MCF 10A (cell line): ENCODE measurements at regions of chr4 and their contacts with region 1.

Region 1: DNA sequence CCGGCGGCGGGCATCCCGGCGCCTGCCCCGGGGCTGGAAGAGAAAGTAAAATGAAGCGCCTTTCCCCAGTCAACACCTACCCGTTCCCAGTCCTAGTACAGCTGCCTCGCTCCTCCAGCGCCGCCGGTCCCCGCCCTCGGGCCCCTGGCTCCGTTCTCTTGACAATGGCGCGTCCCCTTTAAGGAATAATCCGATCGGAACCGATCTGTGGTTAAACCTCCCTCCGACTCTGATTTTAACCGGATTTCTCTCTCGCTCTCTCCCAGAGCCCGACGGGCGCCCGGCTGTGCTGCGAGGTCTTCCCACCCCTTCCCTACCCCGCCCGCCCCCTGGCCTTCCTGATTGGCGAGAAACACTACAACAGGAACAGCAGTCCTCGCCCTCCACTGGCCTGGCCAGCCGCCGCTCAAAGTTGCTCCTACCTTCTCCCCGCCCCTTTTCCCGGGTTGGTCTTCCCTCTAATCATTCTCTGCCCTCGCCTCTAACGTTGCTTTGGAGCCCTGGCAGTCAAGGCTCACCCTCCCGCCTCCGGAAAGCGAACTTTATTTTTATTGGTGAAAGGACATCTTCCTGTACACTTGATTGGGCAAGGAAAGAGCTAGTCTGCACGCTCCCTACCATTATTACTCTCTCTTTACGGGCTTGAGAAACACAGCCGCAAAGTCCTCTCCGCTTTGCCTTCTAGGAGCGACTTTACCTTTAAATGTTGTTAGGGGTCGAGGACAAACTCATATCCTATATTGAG is at the start of gene FRYL:
- DNase-seq: peak; percentile 100
- H3K4me3 Mint-ChIP-seq: peak within 1 kb of the TSS; percentile 94
- H3K27ac Mint-ChIP-seq: peak within 1 kb of the TSS; percentile 96
- H3K4me1 Mint-ChIP-seq: peaks cover 25% of the 10 kb centered on the region
- H3K27me3 Mint-ChIP-seq: no peaks in the 10 kb centered on the region
- CTCF ChIP-seq: no peak
- total RNA-seq, gene FRYL: 52.3 and 53.9 TPM in 2 replicates

Region 2: GRCh38 chr4:48254381-48255071 is 525.6 kb before region 1 on chr4:
- CTCF ChIA-PET with region 1: no interaction called
- POLR2A ChIA-PET with region 1: no interaction called
- intact Hi-C with region 1: no loop called
- DNase-seq: peak; percentile 63
- H3K4me3 Mint-ChIP-seq: no peak overlapping the region
- H3K27ac Mint-ChIP-seq: no peak overlapping the region
- H3K4me1 Mint-ChIP-seq: peaks cover 10% of the 10 kb centered on the region
- H3K27me3 Mint-ChIP-seq: no peaks in the 10 kb centered on the region
- CTCF ChIP-seq: no peak

Region 3: GRCh38 chr4:48269861-48270522 is 510.2 kb before region 1 on chr4:
- CTCF ChIA-PET with region 1: no interaction called
- POLR2A ChIA-PET with region 1: no interaction called
- intact Hi-C with region 1: no loop called
- DNase-seq: peak; percentile 92
- H3K4me3 Mint-ChIP-seq: peak overlapping the region; percentile 85
- H3K27ac Mint-ChIP-seq: peak overlapping the region; percentile 7
- H3K4me1 Mint-ChIP-seq: no peaks in the 10 kb centered on the region
- H3K27me3 Mint-ChIP-seq: no peaks in the 10 kb centered on the region
- CTCF ChIP-seq: peak; percentile 19

Region 4: GRCh38 chr4:48578132-48578968 is 201.8 kb before region 1 on chr4:
- CTCF ChIA-PET with region 1: interaction called, 13 read pairs
- POLR2A ChIA-PET with region 1: interaction called, 48 read pairs
- intact Hi-C with region 1: loop called (anchors 1 kb)
- DNase-seq: peak; percentile 80
- H3K4me3 Mint-ChIP-seq: no peak overlapping the region
- H3K27ac Mint-ChIP-seq: peak overlapping the region; percentile 70
- H3K4me1 Mint-ChIP-seq: no peaks in the 10 kb centered on the region
- H3K27me3 Mint-ChIP-seq: no peaks in the 10 kb centered on the region
- CTCF ChIP-seq: peak; percentile 78

Region 5: GRCh38 chr4:48687313-48688051 is 92.7 kb before region 1 on chr4:
- CTCF ChIA-PET with region 1: no interaction called
- POLR2A ChIA-PET with region 1: interaction called, 26 read pairs
- intact Hi-C with region 1: loop called (anchors 5 kb)
- DNase-seq: no peak
- H3K4me3 Mint-ChIP-seq: no peak overlapping the region
- H3K27ac Mint-ChIP-seq: no peak overlapping the region
- H3K4me1 Mint-ChIP-seq: peaks cover 11% of the 10 kb centered on the region
- H3K27me3 Mint-ChIP-seq: no peaks in the 10 kb centered on the region
- CTCF ChIP-seq: no peak

Region 6: GRCh38 chr4:48792348-48793006 is 12.3 kb after region 1 on chr4:
- CTCF ChIA-PET with region 1: interaction called, 9 read pairs
- POLR2A ChIA-PET with region 1: interaction called, 16 read pairs
- intact Hi-C with region 1: no loop called
- DNase-seq: no peak
- H3K4me3 Mint-ChIP-seq: no peak overlapping the region
- H3K27ac Mint-ChIP-seq: no peak overlapping the region
- H3K4me1 Mint-ChIP-seq: no peaks in the 10 kb centered on the region
- H3K27me3 Mint-ChIP-seq: no peaks in the 10 kb centered on the region
- CTCF ChIP-seq: no peak

Region 7: DNA sequence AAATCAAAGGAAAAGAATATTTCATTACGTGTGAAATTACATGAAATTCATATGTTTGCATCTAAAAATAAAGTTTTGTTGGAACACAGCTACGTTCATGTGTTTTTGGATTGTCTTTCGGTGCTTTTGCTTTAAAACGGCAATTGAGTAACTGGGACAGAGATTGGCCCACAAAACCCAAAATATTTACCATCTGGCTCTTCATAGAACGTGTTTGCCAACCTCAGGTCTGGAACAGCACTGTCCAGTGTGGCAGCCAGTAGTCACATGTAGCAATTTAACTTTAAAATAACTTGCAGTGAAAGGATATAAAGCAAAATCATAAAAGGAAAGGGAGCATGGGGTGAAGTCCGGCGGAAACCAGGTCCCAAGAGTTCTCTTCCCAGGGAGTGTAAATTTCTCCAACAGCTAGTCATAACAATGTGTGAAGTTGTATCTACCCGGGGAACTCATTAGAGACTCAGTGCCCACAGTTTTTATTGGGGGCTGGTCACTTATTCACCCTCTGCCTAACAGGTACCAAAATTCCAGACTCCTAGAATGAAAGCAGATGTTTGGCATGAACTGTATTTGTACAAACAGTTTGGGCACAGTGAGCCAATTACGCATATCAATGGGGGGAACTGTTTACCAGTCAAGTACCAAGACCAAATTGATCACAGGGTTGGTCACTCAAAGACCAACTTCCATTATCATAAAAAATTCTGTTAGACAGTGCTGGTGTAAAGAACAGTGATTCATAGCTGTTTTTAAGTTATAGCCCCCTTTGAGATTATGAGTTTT is 61.1 kb after region 1 on chr4:
- CTCF ChIA-PET with region 1: interaction called, 4 read pairs
- POLR2A ChIA-PET with region 1: interaction called, 12 read pairs
- intact Hi-C with region 1: no loop called
- DNase-seq: no peak
- H3K4me3 Mint-ChIP-seq: no peak overlapping the region
- H3K27ac Mint-ChIP-seq: no peak overlapping the region
- H3K4me1 Mint-ChIP-seq: peaks cover 17% of the 10 kb centered on the region
- H3K27me3 Mint-ChIP-seq: no peaks in the 10 kb centered on the region
- CTCF ChIP-seq: no peak

Region 8: DNA sequence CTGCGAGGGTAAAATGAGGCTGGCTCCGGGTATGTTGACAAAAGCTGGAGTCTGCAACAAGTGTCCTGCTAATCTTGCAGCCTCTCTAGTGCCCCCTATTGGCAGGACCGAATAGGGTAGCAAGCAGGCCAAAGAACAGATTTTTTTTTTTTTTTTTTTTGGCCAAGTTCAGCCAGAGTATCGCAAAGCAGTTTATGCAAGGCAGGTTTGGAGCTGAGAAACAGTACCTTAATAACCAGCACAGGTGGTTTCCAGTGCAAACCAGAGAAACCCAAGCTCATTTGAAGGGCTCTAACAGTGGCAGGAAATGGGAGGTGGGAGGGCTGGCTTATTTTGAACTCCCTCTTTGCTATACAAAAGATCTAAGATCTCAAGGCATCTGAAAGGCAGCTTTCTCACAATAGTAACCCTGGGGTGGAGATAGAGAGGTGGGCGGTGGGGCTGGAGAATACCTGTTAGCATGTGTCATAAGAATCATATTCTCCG is 164.6 kb after region 1 on chr4:
- CTCF ChIA-PET with region 1: no interaction called
- POLR2A ChIA-PET with region 1: interaction called, 10 read pairs
- intact Hi-C with region 1: loop called (anchors 1 kb)
- DNase-seq: peak; percentile 73
- H3K4me3 Mint-ChIP-seq: peak overlapping the region; percentile 48
- H3K27ac Mint-ChIP-seq: peak overlapping the region; percentile 93
- H3K4me1 Mint-ChIP-seq: peaks cover 34% of the 10 kb centered on the region
- H3K27me3 Mint-ChIP-seq: no peaks in the 10 kb centered on the region
- CTCF ChIP-seq: peak; percentile 81